Esophagus muscularis mucosa (tissue), 4 donors: ENCODE measurements at regions of chr9 and their contacts with region 1.

Region 1: DNA sequence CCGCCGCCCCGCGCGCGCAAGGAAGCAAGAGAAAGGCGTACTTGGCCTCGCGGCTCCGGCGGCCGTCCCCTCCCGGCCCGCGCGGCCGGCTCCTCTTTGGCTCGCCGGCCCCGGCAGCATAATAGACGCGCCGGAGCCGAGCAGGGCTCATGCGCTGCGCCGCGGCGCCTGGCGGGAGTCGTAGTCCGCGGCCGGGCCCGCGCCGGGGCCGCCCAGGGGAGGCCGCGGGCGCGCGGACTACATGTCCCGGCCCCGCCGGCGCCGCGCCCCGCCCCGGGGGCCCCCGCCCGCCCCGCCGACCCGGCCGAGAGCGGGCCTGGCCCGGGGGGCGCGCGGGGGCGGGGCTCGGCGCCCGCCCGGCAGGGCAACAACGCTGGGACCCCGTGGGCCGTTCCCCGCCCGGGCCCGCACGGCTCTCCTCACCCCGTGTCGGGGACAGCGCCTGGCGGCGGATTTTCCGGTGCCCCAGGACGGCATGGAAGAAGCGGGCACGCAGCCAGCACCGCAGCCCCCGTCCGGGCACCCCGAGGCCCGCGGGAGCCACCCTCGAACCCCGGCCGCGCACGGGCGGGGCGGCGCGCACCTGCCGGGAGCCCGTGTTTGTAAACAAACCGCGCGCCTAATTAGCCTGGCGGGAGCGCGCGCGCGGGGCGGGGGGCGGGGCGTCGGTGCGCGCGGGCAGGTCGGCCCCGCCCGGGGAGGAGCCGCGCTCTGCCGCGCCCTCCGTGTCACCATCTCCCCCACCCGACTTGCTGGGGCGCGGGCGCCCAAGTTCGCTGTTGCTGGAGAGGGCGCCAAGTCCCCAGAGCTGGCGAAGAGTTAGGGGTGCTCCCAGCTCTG is at the start of gene BRD3:
- DNase-seq: no peak
- H3K4me3 ChIP-seq: peak within 1 kb of the TSS; percentile 88 to 94 (median 90)
- H3K27ac ChIP-seq: peak within 1 kb of the TSS; percentile 98 to 99 (median 98)
- H3K4me1 ChIP-seq: peaks cover 23 to 48% (median 43%) of the 10 kb centered on the region in 4 donors
- H3K27me3 ChIP-seq: no peaks in the 10 kb centered on the region
- CTCF ChIP-seq: no peak
- EP300 ChIP-seq: no peak
- POLR2A ChIP-seq: no peak
- total RNA-seq, gene BRD3: 30.0 to 38.2 (median 33.3) TPM

Region 2: DNA sequence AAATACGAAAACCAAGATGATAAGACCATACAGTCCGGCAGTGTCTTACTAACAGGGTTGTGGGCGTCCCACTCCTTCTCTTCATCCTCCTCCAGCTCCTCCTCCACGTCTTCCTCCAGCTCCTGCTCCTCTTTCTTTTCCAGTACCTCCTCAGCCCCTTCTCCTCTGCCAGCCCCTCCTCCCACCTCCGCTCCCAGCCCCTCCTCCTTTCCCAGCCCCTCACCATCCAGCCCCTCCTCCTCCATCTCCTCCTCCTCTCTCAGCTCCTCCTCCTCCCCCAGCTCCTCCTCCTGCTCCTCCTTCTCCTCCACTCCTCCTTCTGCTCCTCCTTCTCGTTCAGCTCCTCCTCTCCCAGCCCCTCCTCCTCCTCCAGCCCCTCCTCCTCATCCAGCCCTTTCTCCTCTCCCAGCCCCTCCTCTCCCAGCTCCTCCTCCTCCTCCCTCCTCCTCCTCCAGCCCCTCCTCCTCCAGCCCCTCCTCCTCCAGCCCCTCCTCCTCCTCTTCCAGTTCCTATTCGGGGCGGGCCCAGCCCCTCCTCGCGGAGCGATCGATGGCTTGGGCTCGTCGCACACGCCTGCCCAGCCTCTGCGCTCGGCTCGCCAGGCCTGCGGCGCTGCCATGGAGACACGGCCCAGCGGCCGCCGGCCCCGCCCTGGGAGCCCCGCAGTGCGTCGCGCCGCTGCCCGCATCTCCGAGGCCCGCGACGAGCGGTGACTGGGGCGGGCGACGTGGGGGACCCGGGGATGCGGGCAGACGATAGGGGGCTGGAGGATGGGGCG is 43.1 kb before region 1 on chr9 and contains the start of gene BRD3OS:
- intact Hi-C with region 1: loop called (anchors 2 kb)
- DNase-seq: peak; percentile 100
- H3K4me3 ChIP-seq: peak within 1 kb of the TSS; percentile 79 to 98 (median 95)
- H3K27ac ChIP-seq: peak within 1 kb of the TSS; percentile 75 to 86 (median 82)
- H3K4me1 ChIP-seq: peaks cover 8 to 19% (median 18%) of the 10 kb centered on the region in 4 donors
- H3K27me3 ChIP-seq: no peaks in the 10 kb centered on the region
- CTCF ChIP-seq: peak in 1 of 3 experiments; percentile 31
- EP300 ChIP-seq: no peak
- POLR2A ChIP-seq: no peak
- total RNA-seq, gene BRD3OS: 13.4 to 33.4 (median 21.7) TPM

Region 3: GRCh38 chr9:134135343-134136118 is 67.4 kb after region 1 on chr9 and contains the start of gene WDR5:
- intact Hi-C with region 1: loop called (anchors 5 kb)
- DNase-seq: peak; percentile 95
- H3K4me3 ChIP-seq: peak within 1 kb of the TSS; percentile 74 to 95 (median 84)
- H3K27ac ChIP-seq: peak within 1 kb of the TSS; percentile 85 to 96 (median 91)
- H3K4me1 ChIP-seq: peaks cover 37 to 68% (median 63%) of the 10 kb centered on the region in 4 donors
- H3K27me3 ChIP-seq: no peaks in the 10 kb centered on the region
- CTCF ChIP-seq: peak in 1 of 3 experiments; percentile 3
- EP300 ChIP-seq: no peak
- POLR2A ChIP-seq: no peak
- total RNA-seq, gene WDR5: 20.7 to 34.2 (median 24.6) TPM

Region 4: DNA sequence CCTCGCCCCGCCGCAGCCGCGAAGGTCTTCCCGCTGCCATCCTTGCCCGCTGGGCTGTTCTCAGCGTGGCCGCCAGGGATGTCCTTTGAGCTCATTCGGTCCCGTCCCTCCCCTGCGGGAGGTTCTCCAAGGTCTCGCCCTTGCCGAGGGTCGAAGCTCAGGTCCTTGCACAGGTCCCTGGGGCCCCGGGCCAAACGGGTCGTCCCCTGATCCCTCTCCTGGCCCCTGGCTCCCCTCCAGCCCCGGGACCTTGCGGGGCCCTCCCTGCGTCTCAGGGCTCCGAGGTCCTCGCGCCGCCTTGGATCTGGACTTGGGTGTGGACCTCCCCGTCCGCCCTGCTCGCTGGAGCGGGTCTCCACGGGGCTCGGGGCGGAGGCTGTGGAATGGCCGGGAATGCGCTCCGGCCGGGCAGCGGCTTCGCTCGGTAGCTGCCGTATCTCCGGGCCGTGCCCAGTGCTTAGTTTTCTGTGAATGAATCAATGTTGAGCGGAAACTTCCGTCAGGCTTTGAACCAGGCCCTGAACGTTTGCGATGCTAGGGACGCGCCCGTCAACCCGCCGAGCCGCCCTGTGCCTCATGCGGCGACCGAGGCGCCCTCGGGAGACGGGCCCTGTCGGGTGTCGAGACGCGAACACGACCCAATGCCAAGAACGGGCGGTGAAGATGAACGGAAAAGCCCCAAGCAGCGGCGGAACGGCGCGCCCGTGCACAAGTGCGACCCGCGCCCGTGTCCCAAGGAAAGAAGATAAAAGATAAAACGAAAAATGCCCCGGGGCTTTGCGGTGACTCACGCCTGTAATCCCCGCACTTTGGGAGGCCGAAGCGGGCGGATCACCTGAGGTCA is 95.5 kb after region 1 on chr9:
- intact Hi-C with region 1: loop called (anchors 2 kb)
- DNase-seq: peak; percentile 94
- H3K4me3 ChIP-seq: no peak overlapping the region
- H3K27ac ChIP-seq: no peak overlapping the region
- H3K4me1 ChIP-seq: peaks cover 8 to 18% (median 12%) of the 10 kb centered on the region in 4 donors
- H3K27me3 ChIP-seq: no peaks in the 10 kb centered on the region
- CTCF ChIP-seq: peak in 2 of 3 experiments; percentile 27 to 69
- EP300 ChIP-seq: no peak
- POLR2A ChIP-seq: no peak